Motor neuron (in vitro differentiated cells): ENCODE measurements at regions of chr14 and their contacts with region 1.

Region 1: DNA sequence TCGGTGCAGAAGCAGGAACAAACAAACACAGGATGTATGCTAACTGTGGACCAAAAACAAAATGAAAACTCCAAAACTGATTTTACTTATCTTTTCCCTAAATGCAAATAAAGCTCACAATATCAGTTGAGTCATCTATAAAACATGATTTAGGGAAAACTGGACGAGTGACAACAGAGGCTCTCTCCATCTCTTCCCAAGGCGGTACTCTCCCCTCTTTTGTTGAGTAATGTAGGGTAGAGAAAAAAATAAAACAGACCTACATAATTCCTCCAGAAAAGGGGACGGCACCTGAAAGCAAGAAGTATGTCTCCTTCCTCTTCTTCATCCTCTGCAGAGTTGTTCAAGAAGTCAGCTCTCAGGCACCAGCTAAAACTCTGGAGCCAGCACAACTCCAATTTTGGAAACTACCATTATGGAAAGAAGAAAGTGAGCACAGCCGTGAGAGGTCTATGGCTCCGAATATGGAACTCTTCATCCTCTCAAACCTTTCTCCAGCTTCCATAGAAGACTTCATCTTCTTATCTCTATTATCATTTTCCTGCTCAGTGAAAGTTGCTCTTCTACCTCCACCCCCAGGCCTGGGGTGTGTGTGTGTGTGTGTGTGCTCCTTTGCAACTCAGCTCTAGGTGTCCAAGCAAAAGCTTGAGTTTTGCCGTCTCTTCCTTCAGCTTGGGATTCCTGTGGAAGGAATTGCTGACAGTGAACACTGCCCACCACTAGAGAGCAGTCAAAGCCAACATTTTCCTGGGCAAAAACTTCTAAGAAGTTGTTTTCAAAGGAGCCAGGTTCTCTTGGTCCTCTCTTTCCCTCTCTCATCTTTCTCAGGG is 155.4 kb downstream of the DIO2 start:
- ATAC-seq: peak in 4 of 8 experiments; percentile 45 to 85 (median 82)
- H3K4me3 ChIP-seq: no peak overlapping the region
- H3K27ac ChIP-seq: no peak overlapping the region
- H3K4me1 ChIP-seq: no peaks in the 10 kb centered on the region

Region 2: GRCh38 chr14:80172375-80173051 is 116.6 kb after region 1 on chr14:
- in situ Hi-C with region 1: no loop called
- ATAC-seq: peak in 2 of 8 experiments; percentile 59 to 66
- H3K4me3 ChIP-seq: no peak overlapping the region
- H3K27ac ChIP-seq: no peak overlapping the region
- H3K4me1 ChIP-seq: no peaks in the 10 kb centered on the region

Region 3: GRCh38 chr14:80364274-80364673 is 308.4 kb after region 1 on chr14:
- in situ Hi-C with region 1: loop called in 1 of 9 experiments (anchors 25 kb)
- ATAC-seq: peak in 3 of 8 experiments; percentile 68 to 74 (median 71)
- H3K4me3 ChIP-seq: no peak overlapping the region
- H3K27ac ChIP-seq: no peak overlapping the region
- H3K4me1 ChIP-seq: no peaks in the 10 kb centered on the region

Region 4: GRCh38 chr14:80850197-80850814 is 794.4 kb after region 1 on chr14:
- in situ Hi-C with region 1: loop called in 2 of 9 experiments (anchors 10 to 25 kb)
- ATAC-seq: peak in 4 of 8 experiments; percentile 43 to 70 (median 66)
- H3K4me3 ChIP-seq: no peak overlapping the region
- H3K27ac ChIP-seq: no peak overlapping the region
- H3K4me1 ChIP-seq: peaks cover 0 to 4% of the 10 kb centered on the region in 2 donors